Activated CD4-positive, alpha-beta T cell treated with anti-CD3 and anti-CD28 coated beads for 36 hours (primary cell): ENCODE measurements at regions of chr10 and their contacts with region 1.

Region 1: GRCh38 chr10:6151087-6151977 is 51.4 kb upstream of the PFKFB3 start:
- DNase-seq: peak; percentile 69
- ATAC-seq: peak; percentile 82
- H3K4me3 Mint-ChIP-seq: peak overlapping the region; percentile 43
- H3K27ac Mint-ChIP-seq: peak overlapping the region; percentile 73
- H3K4me1 Mint-ChIP-seq: peaks cover 59% of the 10 kb centered on the region
- H3K27me3 Mint-ChIP-seq: no peaks in the 10 kb centered on the region

Region 2: DNA sequence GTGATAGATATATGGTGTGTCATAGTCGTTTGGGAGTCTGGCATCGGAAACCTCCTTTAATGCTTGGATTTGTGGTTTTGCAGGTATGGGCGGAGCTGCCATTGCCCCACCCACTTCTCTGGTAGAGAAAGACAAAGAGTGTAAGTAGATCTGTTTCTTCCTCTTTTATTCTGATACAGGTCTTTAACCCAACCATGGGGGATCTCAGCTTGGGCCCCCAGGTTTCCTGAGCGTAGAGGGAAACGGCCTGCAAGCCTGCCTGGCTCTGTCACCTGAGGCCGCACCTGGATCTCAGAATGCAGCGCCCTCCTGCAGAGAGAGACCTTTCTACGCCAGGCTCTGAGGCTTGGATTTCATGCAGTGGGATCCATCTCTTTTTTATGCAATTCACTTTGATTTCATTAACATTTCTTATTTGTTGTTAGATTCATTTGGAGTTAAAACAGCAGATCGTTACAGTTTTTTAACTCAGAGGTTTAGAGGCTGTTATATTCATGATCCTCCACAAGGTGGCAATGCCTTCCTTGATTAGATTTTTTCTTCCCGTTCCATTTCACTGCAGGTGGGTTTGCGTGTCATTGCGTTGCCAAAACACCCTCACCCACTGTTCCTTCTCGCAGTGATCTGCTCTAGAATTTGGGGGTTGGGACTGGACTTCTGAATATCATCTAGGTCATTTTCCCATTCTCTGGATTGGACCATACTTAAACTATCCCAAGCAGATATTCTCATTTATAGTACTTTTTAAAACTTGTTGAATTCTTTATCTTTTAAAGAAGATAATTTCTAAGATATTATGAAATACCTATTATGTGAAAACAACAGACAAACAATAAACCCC is 42.5 kb before region 1 on chr10:
- CTCF ChIA-PET with region 1: interaction called, 18 read pairs
- POLR2A ChIA-PET with region 1: no interaction called
- intact Hi-C with region 1: loop called (anchors 1 kb)
- DNase-seq: peak; percentile 45
- ATAC-seq: peak; percentile 63
- H3K4me3 Mint-ChIP-seq: no peak overlapping the region
- H3K27ac Mint-ChIP-seq: peak overlapping the region; percentile 89
- H3K4me1 Mint-ChIP-seq: peaks cover 31% of the 10 kb centered on the region
- H3K27me3 Mint-ChIP-seq: no peaks in the 10 kb centered on the region

Region 3: DNA sequence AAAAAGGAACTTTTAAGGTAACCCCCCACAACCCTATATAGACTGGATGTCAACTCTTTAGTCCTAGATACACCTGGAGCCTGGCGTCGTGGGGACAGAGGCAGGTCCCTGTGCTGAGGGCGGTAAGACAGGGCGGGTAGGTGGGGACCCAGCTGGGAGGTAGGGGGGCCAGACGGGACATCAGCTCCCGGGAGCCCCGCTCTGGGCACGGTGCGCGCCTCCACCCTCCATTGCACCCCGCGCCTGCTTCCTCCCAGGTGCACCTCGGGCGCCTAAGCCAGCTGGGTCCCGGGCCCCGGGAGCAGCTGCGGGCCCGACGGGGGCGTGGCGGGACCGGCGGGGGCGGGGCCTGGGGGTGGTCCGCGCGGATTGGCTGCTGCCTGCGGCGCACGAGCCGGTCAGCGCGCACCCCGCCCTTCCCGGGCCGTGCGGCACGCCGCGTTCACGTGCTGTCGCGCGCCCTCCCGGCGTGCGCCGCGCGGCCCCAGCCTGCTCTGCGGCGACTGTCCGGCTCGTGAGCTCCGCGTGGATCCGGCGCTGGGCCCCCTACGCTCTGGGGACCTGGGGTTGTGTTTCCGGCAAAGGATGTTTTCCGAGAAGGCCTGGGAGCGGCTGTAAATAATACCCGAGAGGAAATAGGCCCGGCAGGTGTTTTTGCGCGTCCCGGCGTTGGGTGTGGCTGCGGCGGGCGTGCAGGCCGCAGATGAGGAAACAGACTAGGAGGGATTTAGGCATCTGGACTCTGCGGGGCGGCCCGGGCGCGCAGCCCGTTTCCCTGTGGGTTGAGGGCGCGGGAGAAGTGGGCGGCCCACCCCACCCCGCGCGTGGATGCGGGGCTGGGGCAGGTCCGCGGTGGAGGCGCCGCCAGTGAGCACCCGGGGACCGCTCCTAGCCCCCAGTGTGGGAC is 12.3 kb after region 1 on chr10:
- CTCF ChIA-PET with region 1: interaction called, 18 read pairs
- POLR2A ChIA-PET with region 1: interaction called, 4 read pairs
- intact Hi-C with region 1: no loop called
- DNase-seq: peak; percentile 94
- ATAC-seq: peak; percentile 92
- H3K4me3 Mint-ChIP-seq: peak overlapping the region; percentile 92
- H3K27ac Mint-ChIP-seq: peak overlapping the region; percentile 95
- H3K4me1 Mint-ChIP-seq: peaks cover 67% of the 10 kb centered on the region
- H3K27me3 Mint-ChIP-seq: no peaks in the 10 kb centered on the region

Region 4: GRCh38 chr10:6748978-6749635 is 597.8 kb after region 1 on chr10:
- CTCF ChIA-PET with region 1: no interaction called
- POLR2A ChIA-PET with region 1: no interaction called
- intact Hi-C with region 1: no loop called
- DNase-seq: no peak
- ATAC-seq: no peak
- H3K4me3 Mint-ChIP-seq: no peak overlapping the region
- H3K27ac Mint-ChIP-seq: no peak overlapping the region
- H3K4me1 Mint-ChIP-seq: no peaks in the 10 kb centered on the region
- H3K27me3 Mint-ChIP-seq: peaks cover 16% of the 10 kb centered on the region